Gastrocnemius medialis (tissue), 4 donors: ENCODE measurements at regions of chr10 and their contacts with region 1.

Region 1: GRCh38 chr10:133309111-133309719 is 501 bp downstream of the ZNF511 start:
- DNase-seq: peak; percentile 89 to 92
- ATAC-seq: peak; percentile 90 to 91
- H3K4me3 ChIP-seq: peak overlapping the region; percentile 77 to 99 (median 92)
- H3K27ac ChIP-seq: peak overlapping the region; percentile 81 to 99 (median 90)
- H3K4me1 ChIP-seq: peaks cover 24 to 26% of the 10 kb centered on the region in 2 donors
- H3K27me3 ChIP-seq: no peaks in the 10 kb centered on the region
- CTCF ChIP-seq: no peak
- POLR2A ChIP-seq: no peak

Region 2: DNA sequence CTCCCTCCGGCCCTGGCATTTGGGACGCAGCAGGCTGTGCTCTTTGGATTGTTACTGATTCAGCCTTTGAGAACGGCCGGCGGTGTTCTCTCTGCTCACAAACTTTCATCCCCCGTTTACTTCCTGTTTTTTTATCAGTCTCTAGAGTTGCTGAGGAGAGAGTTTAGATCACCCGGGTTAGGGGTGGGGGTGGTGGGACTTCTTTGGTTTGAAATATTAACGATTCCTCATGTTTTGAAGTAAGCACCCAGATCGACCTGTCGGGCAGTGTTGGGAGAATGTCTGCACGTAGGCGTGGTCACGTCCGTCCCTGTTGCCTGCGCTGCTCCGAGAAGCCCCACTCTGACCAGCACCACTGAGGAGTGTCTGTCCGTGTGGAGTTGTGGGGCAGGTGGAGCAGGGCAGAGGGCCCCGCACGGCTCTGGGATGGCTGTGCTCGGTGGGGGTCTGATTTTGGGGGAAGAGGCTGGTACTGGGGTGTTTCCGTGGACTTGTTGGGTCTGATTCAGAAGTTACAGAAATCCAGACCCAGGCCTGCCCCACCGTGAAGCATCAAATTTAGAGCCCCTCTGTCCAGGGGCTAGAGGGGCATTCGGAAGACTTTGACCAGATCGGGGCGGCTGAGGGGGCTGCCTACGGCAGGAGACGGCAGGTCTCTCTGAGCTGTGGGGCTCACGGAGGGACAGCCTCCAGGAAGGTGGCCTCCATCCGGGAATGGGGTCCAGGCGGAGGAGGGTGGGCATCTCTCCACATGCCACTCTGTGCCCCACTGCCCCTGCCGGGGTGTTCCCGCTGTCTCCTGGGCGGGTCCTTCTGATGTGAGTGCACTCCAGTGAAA is 764.3 kb before region 1 on chr10:
- in situ Hi-C with region 1: no loop called
- intact Hi-C with region 1: no loop called
- DNase-seq: no peak
- ATAC-seq: no peak
- H3K4me3 ChIP-seq: no peak overlapping the region
- H3K27ac ChIP-seq: no peak overlapping the region
- H3K4me1 ChIP-seq: peaks cover 45 to 70% of the 10 kb centered on the region in 2 donors
- H3K27me3 ChIP-seq: no peaks in the 10 kb centered on the region
- CTCF ChIP-seq: no peak
- POLR2A ChIP-seq: no peak

Region 3: DNA sequence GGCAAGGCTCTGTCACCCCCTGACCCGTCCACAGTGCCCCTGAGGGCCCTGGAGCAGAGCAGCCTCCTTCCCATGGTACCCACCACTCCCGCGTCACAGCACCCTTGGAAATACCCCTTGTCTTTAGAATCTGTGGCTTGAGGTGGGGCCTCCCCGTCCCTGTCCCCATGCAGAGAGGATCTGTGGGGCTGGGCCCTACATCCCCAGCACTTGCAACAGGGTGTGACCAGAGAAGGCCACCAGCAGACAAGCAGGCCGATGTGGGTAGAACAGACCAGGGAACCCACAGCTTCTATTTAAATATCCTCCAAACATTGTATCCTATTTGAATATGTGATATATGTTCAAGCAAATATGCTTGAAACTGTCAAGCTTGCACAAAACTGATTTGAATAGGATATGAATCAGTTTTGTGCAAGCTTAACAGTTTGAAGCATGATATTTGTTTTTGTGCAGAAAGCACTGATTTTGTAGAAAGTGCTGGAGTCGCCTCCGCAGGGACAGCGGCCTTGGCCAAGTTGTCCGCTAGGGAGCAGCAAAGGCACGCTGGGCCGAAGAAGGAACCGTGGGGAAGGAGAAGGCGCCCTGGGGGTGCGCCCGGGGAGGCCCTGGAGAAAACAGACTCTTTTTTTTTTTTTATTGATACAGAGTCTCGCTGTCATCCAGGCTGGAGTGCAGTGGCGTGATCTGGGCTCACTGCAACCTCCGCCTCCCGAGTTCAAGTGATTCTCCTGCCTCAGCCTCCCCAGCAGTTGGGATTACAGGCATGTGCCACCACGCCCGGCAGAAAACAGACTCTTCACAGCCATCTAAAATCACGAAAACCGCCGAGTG is 369.0 kb before region 1 on chr10:
- in situ Hi-C with region 1: no loop called
- intact Hi-C with region 1: no loop called
- DNase-seq: no peak
- ATAC-seq: peak in 1 of 2 donors; percentile 51
- H3K4me3 ChIP-seq: no peak overlapping the region
- H3K27ac ChIP-seq: no peak overlapping the region
- H3K4me1 ChIP-seq: no peaks in the 10 kb centered on the region
- H3K27me3 ChIP-seq: peaks cover 21 to 26% (median 24%) of the 10 kb centered on the region in 3 donors
- CTCF ChIP-seq: peak; percentile 44 to 75 (median 66)
- POLR2A ChIP-seq: no peak

Region 4: GRCh38 chr10:133226251-133226808 is 82.9 kb before region 1 on chr10:
- in situ Hi-C with region 1: no loop called
- intact Hi-C with region 1: no loop called
- DNase-seq: no peak
- ATAC-seq: no peak
- H3K4me3 ChIP-seq: no peak overlapping the region
- H3K27ac ChIP-seq: no peak overlapping the region
- H3K4me1 ChIP-seq: no peaks in the 10 kb centered on the region
- H3K27me3 ChIP-seq: peaks cover 41 to 66% (median 51%) of the 10 kb centered on the region in 3 donors
- CTCF ChIP-seq: no peak
- POLR2A ChIP-seq: no peak

Region 5: DNA sequence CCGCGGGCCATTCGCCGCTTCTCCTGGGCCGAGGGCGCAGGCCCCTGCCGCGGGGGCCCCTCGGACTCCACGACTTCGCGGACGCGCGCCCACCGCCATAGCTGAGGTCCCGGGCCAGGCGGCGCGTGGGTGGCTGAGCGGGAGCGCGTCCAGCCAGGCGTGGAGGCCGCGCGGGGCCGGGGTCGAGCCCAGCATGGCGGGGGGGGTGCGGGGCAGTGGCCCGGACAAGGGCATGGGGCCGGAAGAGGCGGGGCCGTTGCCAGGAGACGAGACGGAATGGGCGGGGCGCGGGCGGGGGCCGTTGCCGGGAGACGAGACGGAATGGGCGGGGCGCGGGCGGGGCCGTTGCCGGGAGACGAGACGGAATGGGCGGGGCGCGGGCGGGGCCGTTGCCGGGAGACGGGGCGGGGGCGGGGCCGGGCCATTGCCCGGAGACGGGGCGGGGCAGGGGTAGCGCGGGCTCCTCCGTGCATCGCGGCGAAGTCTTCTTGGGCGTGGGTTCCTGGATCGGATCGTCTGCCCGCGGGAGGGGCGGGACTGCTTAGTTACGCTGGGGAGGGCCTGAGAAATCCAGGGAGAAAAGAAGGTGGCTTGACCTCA is 47.4 kb before region 1 on chr10:
- in situ Hi-C with region 1: no loop called
- intact Hi-C with region 1: loop called (anchors 2 kb)
- DNase-seq: peak; percentile 76 to 86
- ATAC-seq: peak; percentile 85 to 87
- H3K4me3 ChIP-seq: peak overlapping the region; percentile 67 to 95 (median 80)
- H3K27ac ChIP-seq: peak overlapping the region; percentile 86 to 97 (median 95)
- H3K4me1 ChIP-seq: peaks cover 22 to 27% of the 10 kb centered on the region in 2 donors
- H3K27me3 ChIP-seq: no peaks in the 10 kb centered on the region
- CTCF ChIP-seq: no peak
- POLR2A ChIP-seq: peak; percentile 64 to 69

Region 6: GRCh38 chr10:133373104-133373624 is 63.9 kb after region 1 on chr10 and contains the start of gene ECHS1:
- in situ Hi-C with region 1: no loop called
- intact Hi-C with region 1: loop called (anchors 2 kb)
- DNase-seq: peak; percentile 86 to 93
- ATAC-seq: peak; percentile 98
- H3K4me3 ChIP-seq: peak within 1 kb of the TSS; percentile 71 to 88 (median 80)
- H3K27ac ChIP-seq: peak within 1 kb of the TSS; percentile 71 to 88 (median 86)
- H3K4me1 ChIP-seq: peaks cover 14 to 15% of the 10 kb centered on the region in 2 donors
- H3K27me3 ChIP-seq: no peaks in the 10 kb centered on the region
- CTCF ChIP-seq: no peak
- POLR2A ChIP-seq: peak; percentile 53 to 59
- total RNA-seq, gene ECHS1: 96.7 to 123 (median 106) TPM

Region 7: GRCh38 chr10:133378251-133379096 is 69.3 kb after region 1 on chr10:
- in situ Hi-C with region 1: no loop called
- intact Hi-C with region 1: loop called (anchors 2 kb)
- DNase-seq: peak in 1 of 2 donors; percentile 41
- ATAC-seq: peak; percentile 67 to 70
- H3K4me3 ChIP-seq: peak overlapping the region; percentile 93 to 98 (median 96)
- H3K27ac ChIP-seq: peak overlapping the region; percentile 76 to 87 (median 80)
- H3K4me1 ChIP-seq: peaks cover 14 to 17% of the 10 kb centered on the region in 2 donors
- H3K27me3 ChIP-seq: no peaks in the 10 kb centered on the region
- CTCF ChIP-seq: no peak
- POLR2A ChIP-seq: peak; percentile 20 to 35